GM13977 (cell line): ENCODE measurements at regions of chr22 and their contacts with region 1.

Region 1: GRCh38 chr22:41403532-41404318 is 22.0 kb downstream of the TEF start:
- DNase-seq: peak; percentile 94
- CTCF ChIP-seq: peak; percentile 95

Region 2: DNA sequence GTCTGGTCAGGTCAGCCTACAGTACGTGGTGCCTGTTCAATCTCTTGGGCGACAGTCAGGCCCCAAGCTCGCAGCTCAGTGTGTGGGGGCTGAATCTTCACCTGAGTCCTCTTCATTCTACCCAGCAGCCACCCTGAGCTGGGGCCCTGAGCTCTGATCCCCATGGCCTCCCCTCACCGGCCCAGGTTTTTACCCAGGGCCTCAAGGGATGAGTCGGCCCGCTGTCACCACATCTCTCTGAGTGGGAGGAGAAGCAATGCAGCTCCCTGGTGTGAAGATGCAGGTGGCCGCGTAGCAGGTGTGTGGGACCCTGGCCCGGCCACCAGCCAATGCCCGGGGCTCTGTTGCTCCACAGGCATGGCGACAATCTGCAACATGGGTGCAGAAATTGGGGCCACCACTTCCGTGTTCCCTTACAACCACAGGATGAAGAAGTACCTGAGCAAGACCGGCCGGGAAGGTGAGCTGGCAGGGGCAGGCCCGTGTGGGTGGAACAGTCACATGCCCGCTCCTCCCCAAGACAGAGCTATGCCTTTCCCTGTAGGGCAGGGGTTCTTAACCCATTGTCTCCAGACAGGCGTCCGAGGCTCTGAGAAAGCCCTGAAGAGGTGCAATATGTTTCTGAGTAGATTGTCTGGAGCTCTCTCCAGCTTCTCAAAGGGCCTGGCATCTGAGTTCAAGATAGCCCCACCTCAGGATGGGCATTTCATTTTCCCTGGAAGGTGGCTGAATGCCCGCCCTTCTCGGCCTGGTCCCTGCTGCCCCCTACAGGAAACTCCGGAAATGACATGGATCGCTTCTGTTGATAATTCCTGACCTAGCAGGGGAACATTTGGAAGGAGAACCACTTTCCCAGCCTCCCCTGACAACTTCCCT is 113.7 kb after region 1 on chr22:
- in situ Hi-C with region 1: loop called (anchors 10 kb)
- DNase-seq: peak; percentile 52
- CTCF ChIP-seq: peak; percentile 79

Region 3: GRCh38 chr22:41589391-41590241 is 185.9 kb after region 1 on chr22 and contains the start of gene PMM1:
- in situ Hi-C with region 1: no loop called
- DNase-seq: peak; percentile 100
- CTCF ChIP-seq: no peak

Region 4: GRCh38 chr22:41832553-41833368 is 429.0 kb after region 1 on chr22 and contains the start of gene SREBF2:
- in situ Hi-C with region 1: no loop called
- DNase-seq: peak; percentile 98
- CTCF ChIP-seq: no peak